Activated naive CD4-positive, alpha-beta T cell treated with anti-CD3 and anti-CD28 coated beads for 36 hours (primary cell): ENCODE measurements at regions of chr1 and their contacts with region 1.

Region 1: DNA sequence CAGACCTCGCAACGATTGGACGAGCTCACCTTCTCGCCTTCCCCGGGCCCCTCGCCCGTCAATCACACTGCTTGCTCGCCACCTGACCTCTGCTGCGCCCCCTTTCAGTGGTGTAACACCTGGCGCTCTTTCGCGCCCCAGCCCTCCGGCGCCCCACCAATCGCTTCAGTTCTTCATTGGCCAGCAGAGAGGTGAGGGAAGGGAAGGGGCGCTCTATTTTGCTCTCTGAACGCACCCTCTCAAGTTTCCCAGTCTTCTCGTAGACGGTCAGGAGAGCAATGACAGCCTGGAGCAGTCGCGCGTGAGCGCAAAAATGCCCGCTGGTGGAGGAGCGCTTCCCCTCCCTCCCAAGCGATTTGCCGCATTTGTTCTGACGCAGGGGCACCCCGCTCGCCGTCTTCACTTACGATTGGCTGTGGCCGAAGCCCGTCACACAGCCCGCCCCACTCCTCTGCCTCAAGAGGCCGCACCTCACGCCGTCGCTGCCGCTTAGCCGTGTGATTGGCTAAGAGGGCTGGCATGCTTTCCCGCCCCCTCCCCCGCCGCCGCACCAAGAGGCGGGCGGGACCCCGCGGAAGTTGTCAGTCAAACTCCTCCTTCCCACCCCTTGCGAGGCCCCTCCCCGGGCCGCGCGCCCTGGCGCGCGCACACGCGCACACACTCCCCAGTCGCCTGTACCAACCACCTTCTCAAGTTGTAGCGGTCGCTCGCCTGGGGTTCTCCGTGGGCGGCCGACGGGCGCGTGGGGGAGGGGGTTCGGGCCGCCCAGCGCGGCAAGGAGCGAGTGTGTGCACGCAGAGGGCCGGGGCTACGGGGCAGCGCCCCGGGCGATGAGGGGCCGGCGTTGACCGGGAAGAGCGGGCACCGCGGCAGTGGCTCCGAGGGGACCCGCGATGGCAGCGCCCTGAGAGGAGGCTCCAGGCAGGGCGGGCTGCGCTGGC is at the start of gene PPP2R5A:
- DNase-seq: peak; percentile 99
- H3K4me3 Mint-ChIP-seq: peak within 1 kb of the TSS; percentile 96
- H3K27ac Mint-ChIP-seq: peak within 1 kb of the TSS; percentile 91
- H3K4me1 Mint-ChIP-seq: peaks cover 32% of the 10 kb centered on the region
- H3K27me3 Mint-ChIP-seq: no peaks in the 10 kb centered on the region
- total RNA-seq, gene PPP2R5A: 30.6 to 31.4 TPM

Region 2: DNA sequence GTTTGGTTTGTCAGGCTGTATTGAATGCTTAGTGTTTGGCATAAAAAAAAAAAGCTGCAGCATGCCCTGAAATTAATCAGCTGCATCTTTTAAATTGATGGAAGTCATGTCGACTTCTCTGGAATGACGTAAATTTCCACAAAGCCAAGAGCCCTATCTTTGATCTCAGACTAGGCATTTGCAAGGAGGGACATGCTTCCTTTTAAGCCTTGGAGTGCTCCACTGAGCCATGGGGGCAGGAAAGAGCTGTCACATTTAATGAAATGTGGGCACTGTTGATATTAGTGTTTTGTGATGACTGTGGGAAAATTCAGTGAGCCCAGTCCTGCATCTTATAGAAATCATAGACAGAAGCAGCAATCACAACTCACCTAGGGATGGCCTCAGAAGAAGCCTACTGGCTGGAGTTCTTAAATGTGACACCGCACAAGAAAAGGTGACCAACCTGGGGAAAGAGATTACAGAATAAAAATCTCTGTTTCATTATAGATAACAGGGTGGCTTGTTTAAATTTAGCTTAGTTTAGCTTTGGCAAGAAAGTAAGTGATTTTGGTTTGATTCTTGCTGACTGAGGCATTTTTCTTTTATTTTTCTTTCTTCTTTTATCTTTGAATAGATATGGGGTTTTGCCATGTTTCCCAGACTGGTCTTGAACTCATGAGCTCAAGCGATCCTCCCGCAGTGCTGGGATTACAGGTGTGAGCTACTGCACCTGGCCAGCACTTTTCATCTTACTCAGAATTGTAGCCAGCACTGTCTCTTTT is 1768.1 kb before region 1 on chr1:
- CTCF ChIA-PET with region 1: no interaction called
- intact Hi-C with region 1: no loop called
- DNase-seq: no peak
- H3K4me3 Mint-ChIP-seq: no peak overlapping the region
- H3K27ac Mint-ChIP-seq: no peak overlapping the region
- H3K4me1 Mint-ChIP-seq: no peaks in the 10 kb centered on the region
- H3K27me3 Mint-ChIP-seq: peaks cover 2% of the 10 kb centered on the region

Region 3: DNA sequence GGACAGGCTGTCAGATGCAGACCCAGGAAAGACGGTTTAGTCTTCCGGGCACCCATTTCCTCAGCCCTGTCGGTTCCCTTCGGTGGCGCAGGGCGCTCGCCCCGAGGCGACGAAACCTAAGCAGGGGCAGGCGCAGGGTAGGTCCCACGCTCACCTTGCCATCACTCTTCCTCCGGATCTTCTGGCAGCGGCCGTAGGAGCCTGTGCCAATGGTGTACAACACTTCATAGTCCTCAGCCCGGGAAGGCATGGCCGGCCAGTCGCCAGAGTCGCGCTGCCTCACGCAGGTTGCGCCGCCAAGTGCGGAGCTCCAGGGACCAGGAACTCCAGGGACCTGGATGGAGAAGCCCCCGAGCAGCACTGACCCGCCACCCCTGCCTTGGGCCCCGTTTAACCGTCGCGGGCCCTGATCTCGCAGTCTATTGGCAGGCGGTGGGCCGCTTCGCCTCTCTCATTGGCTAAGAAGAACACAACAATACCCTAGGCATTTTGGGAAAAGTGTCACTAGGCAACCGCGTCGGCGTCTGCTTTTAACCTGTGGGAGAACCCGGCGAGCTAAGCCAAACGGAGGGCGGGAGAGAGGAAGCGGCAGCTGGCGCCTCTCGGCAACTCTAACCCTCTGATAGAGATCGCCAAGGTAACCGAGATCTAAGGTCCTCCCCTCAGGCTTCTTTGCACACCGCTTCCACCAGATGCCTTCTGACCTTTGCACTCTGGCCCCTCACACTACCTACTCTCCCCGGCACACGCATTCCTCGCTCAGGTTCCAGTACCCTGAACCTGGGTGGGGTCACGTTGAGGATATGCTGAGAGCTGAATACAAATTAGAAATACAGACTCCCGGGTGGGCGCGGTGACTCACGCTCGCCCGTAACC is 609.5 kb before region 1 on chr1 and contains the start of gene NEK2:
- CTCF ChIA-PET with region 1: no interaction called
- intact Hi-C with region 1: loop called (anchors 1 kb)
- DNase-seq: peak; percentile 97
- H3K4me3 Mint-ChIP-seq: peak within 1 kb of the TSS; percentile 86
- H3K27ac Mint-ChIP-seq: peak within 1 kb of the TSS; percentile 76
- H3K4me1 Mint-ChIP-seq: peaks cover 7% of the 10 kb centered on the region
- H3K27me3 Mint-ChIP-seq: no peaks in the 10 kb centered on the region
- total RNA-seq, gene NEK2: 60.8 to 62.3 TPM

Region 4: DNA sequence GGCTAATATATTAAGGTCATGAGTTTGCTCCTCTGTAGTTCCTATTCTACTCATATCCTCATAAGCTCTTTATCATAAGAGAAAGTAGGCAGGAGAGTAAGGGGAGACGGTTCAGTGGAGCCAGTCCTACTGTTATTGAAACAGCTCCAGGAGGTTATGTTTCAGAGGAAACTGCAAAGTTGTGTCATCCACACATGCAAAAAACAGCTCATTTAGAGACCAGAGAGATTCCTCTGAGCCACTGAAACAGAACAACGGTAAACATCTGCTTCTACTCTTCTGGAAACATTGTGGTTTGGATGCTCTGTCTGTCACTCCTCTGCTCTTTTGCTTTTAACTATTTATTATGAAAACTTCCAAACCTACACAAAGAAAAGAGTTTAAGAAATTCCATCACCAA is 66.1 kb before region 1 on chr1:
- CTCF ChIA-PET with region 1: no interaction called
- intact Hi-C with region 1: loop called (anchors 1 kb)
- DNase-seq: peak; percentile 50
- H3K4me3 Mint-ChIP-seq: no peak overlapping the region
- H3K27ac Mint-ChIP-seq: peak overlapping the region; percentile 21
- H3K4me1 Mint-ChIP-seq: peaks cover 20% of the 10 kb centered on the region
- H3K27me3 Mint-ChIP-seq: no peaks in the 10 kb centered on the region

Region 5: GRCh38 chr1:212315907-212316306 is 30.9 kb after region 1 on chr1:
- CTCF ChIA-PET with region 1: interaction called, 5 read pairs
- intact Hi-C with region 1: loop called (anchors 1 kb)
- DNase-seq: peak; percentile 49
- H3K4me3 Mint-ChIP-seq: no peak overlapping the region
- H3K27ac Mint-ChIP-seq: peak overlapping the region; percentile 2
- H3K4me1 Mint-ChIP-seq: peaks cover 40% of the 10 kb centered on the region
- H3K27me3 Mint-ChIP-seq: no peaks in the 10 kb centered on the region

Region 6: DNA sequence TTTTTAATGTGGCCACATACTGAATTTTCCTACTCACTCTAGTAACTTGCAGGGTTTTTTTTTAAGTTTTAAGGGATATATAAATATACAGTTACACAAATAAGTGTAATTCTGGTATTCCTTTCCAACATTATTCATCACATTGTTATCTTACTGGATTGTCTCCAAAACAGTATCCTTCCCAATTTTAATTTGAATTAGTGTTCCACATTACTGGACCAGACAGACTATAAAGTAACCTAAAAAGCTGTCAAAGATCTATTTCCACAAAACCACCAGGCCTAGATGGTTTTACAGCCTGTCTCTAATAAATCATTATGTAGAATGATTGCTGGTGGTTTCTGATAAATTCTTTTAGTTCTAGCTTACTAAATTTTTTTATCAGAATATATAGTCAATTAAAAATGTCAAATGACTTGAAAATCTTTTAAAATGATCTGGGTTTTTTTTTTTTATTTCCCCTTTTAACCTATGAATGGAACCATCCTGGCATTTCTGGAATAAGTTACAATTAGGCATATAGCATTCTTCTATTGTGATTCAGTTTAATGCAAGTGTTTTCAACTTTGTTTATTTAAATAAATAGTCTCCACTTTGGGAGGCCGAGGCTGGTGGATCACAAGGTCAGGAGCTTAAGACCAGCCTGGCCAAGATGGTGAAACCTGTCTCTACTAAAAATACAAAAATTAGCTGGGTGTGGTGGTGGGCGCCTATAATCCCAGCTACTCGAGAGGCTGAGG is 70.4 kb after region 1 on chr1:
- CTCF ChIA-PET with region 1: no interaction called
- intact Hi-C with region 1: no loop called
- DNase-seq: no peak
- H3K4me3 Mint-ChIP-seq: no peak overlapping the region
- H3K27ac Mint-ChIP-seq: no peak overlapping the region
- H3K4me1 Mint-ChIP-seq: peaks cover 8% of the 10 kb centered on the region
- H3K27me3 Mint-ChIP-seq: no peaks in the 10 kb centered on the region

Region 7: DNA sequence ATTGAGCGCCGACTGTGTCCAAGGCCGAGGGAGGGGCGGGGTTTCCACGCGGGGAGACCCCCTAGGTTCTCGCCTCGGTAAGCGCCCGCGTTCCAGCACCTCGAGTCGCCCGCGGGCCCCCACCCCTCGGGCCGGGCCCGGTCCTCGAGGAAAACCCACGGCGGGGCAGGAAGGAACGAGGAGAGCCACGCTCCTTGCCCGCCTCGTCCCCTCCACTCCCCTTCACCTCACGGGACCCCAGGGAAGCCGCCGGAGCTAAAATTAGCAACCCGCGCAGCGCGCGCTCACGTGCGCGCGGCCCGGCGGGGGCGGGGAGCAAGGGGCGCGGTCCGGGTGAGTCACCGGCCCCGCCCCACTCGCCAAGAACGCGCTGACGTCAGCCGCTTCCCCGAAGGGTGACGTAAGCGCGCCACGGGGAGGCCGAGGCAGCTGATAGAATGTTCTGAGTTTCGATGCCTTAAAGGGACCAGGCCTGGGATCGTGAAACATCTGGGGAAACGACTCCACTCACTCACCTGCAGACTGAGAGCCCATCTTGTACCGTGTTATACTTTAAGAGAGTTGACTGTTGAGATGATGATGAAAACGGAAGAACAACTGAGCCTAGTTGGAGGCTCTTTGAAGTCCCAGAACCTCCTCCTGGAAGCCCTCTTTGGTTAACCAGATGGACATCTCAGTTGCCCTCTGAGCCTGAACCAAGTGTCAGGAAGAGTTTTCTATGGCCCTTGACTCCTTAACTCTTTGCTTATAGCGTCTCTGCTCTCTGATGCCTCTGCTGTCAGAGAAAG is 273.9 kb after region 1 on chr1:
- CTCF ChIA-PET with region 1: no interaction called
- intact Hi-C with region 1: loop called (anchors 1 kb)
- DNase-seq: peak; percentile 94
- H3K4me3 Mint-ChIP-seq: peak overlapping the region; percentile 66
- H3K27ac Mint-ChIP-seq: peak overlapping the region; percentile 92
- H3K4me1 Mint-ChIP-seq: peaks cover 13% of the 10 kb centered on the region
- H3K27me3 Mint-ChIP-seq: peaks cover 12% of the 10 kb centered on the region